ENCODE measurements at regions of chr11 and their contacts with region 1.

Region 1: GRCh38 chr11:34585735-34586487 is 35.0 kb upstream of the EHF start:
- DNase-seq: no peak
- H3K4me3 ChIP-seq: peak overlapping the region in 1 of 4 donors; percentile 29
- H3K27ac ChIP-seq: peak overlapping the region; percentile 66 to 78 (median 70)
- H3K4me1 ChIP-seq: peaks cover 14 to 52% (median 19%) of the 10 kb centered on the region in 3 donors
- H3K27me3 ChIP-seq: no peaks in the 10 kb centered on the region
- CTCF ChIP-seq: peak; percentile 17 to 82 (median 72)
- POLR2A ChIP-seq: no peak

Region 2: GRCh38 chr11:34890812-34891211 is 304.9 kb after region 1 on chr11:
- intact Hi-C with region 1: loop called (anchors 5 kb)
- DNase-seq: no peak
- H3K4me3 ChIP-seq: no peak overlapping the region
- H3K27ac ChIP-seq: peak overlapping the region in 2 of 4 donors; percentile 36 to 49
- H3K4me1 ChIP-seq: peaks cover 3 to 37% (median 6%) of the 10 kb centered on the region in 3 donors
- H3K27me3 ChIP-seq: no peaks in the 10 kb centered on the region
- CTCF ChIP-seq: peak in 5 of 6 experiments; percentile 45 to 80 (median 60)
- POLR2A ChIP-seq: no peak

Measured in esophagus squamous epithelium (tissue), 5 donors.